Heart left ventricle (tissue), 16 donors: ENCODE measurements at regions of chr6 and their contacts with region 1.

Region 1: DNA sequence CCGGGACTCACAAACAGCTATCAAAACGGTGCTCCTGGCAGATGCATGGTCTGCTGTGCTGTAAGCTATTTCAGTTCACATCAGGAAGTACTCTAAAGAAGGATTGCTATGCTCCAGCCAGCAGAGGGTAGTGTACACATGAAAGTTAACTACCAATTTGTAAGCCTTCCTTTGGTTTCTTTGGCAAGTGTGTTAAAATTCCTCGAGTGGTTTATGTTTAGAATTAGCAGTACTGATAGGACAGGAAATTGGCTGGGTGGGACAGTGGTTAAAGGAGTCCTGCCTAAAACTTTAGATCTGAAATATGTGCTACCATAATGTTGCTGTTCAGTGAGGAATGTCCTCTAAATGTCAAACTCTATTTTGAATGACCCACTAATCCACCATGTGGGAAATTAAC is 47.4 kb downstream of the TRMT11 start:
- DNase-seq: peak in 3 of 5 donors; percentile 25 to 35 (median 32)
- ATAC-seq: peak; percentile 89 to 96 (median 94)
- H3K4me3 ChIP-seq: no peak overlapping the region
- H3K27ac ChIP-seq: no peak overlapping the region
- H3K4me1 ChIP-seq: peaks cover 0 to 19% (median 6%) of the 10 kb centered on the region in 12 donors
- H3K27me3 ChIP-seq: no peaks in the 10 kb centered on the region
- CTCF ChIP-seq: peak; percentile 24 to 83 (median 56)
- POLR2A ChIP-seq: no peak

Region 2: GRCh38 chr6:125821825-125822281 is 211.8 kb before region 1 on chr6:
- intact Hi-C with region 1: no loop called
- DNase-seq: peak in 2 of 5 donors; percentile 18 to 30
- ATAC-seq: peak; percentile 19 to 78 (median 75)
- H3K4me3 ChIP-seq: no peak overlapping the region
- H3K27ac ChIP-seq: peak overlapping the region in 2 of 12 donors; percentile 1 to 3
- H3K4me1 ChIP-seq: peaks cover 0 to 55% (median 27%) of the 10 kb centered on the region in 12 donors
- H3K27me3 ChIP-seq: no peaks in the 10 kb centered on the region
- CTCF ChIP-seq: no peak
- POLR2A ChIP-seq: no peak

Region 3: GRCh38 chr6:126170978-126171382 is 137.3 kb after region 1 on chr6:
- intact Hi-C with region 1: loop called in 1 of 10 experiments (anchors 10 kb)
- DNase-seq: no peak
- ATAC-seq: no peak
- H3K4me3 ChIP-seq: no peak overlapping the region
- H3K27ac ChIP-seq: no peak overlapping the region
- H3K4me1 ChIP-seq: no peaks in the 10 kb centered on the region
- H3K27me3 ChIP-seq: peaks cover 0 to 7% (median 0%) of the 10 kb centered on the region in 9 donors
- CTCF ChIP-seq: peak in 9 of 12 donors; percentile 6 to 44 (median 37)
- POLR2A ChIP-seq: no peak

Region 4: GRCh38 chr6:126210398-126211075 is 176.8 kb after region 1 on chr6:
- intact Hi-C with region 1: no loop called
- DNase-seq: no peak
- ATAC-seq: no peak
- H3K4me3 ChIP-seq: no peak overlapping the region
- H3K27ac ChIP-seq: no peak overlapping the region
- H3K4me1 ChIP-seq: no peaks in the 10 kb centered on the region
- H3K27me3 ChIP-seq: no peaks in the 10 kb centered on the region
- CTCF ChIP-seq: no peak
- POLR2A ChIP-seq: no peak

Region 5: DNA sequence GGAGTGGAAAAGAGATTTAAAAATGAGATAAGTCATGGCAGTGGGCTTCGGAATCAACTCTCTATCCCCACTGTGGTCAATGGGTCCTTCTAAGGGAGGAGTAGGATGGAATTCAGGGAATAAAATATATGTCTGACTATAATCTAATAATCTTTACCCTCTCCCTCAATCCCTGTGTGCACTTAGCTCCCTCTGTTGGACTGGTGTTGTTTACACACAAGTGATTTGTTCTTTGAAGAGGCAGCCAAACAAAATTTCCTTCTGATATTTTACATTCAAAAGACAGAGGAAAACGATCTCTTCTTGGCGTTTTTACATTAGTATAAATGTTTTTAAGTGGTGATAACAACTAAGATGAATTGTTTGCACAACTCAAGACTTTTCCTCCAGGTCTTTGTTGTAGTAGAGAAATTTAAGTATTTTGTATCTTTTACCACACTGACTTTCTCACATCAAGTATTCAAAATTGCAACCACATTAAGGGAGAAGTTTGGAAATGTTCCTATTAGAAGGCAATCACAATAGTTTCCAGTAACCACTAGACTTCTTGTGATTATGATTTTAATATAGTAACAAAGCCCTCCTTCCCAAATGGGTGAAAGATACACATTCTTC is 624.0 kb after region 1 on chr6:
- intact Hi-C with region 1: loop called in 3 of 10 experiments (anchors 5 to 10 kb)
- DNase-seq: no peak
- ATAC-seq: no peak
- H3K4me3 ChIP-seq: no peak overlapping the region
- H3K27ac ChIP-seq: no peak overlapping the region
- H3K4me1 ChIP-seq: no peaks in the 10 kb centered on the region
- H3K27me3 ChIP-seq: no peaks in the 10 kb centered on the region
- CTCF ChIP-seq: peak in 10 of 12 donors; percentile 8 to 46 (median 20)
- POLR2A ChIP-seq: no peak

Region 6: DNA sequence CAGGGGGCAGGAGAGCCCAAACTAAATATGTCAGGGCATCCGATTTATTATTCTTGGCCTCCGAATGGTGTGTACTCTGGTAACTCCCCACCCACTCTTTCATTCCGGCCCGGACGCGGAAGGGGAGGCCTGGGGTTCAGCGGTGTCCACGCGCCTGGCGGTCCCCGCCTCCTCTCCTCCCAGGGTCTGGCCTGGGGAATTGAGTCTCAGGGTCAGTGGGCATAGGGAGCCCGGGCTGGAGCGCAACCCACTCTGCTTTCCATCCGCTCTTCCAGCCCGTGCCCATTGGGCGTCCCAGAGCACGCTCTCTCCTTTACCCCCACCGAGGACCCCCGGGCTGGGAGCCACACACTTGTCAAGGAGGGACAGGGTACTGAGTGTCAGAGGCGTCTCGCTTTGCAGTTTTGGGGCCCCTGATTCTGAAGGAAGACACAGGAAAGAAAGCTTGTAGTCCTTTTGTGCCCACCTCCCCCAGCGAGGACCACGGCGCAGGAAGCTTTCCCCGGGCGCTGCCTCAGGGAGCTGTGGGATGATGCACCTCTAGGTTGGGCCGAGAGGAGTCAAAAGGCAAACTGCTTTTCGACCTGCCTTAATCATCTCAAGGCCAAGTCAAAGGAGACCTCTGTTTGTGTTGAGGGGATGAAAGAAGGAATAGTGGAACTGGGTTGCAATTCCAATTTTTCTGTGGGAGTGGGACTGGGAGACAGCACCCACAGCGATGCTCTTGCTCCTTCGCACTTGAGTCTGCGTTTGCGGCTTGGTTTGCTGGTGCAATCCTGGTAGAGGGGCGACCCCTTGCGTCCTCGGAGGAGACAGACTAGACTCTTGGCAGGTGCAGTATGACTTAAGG is 1087.3 kb after region 1 on chr6:
- intact Hi-C with region 1: loop called in 3 of 10 experiments (anchors 5 to 10 kb)
- DNase-seq: peak; percentile 58 to 77 (median 64)
- ATAC-seq: peak; percentile 77 to 86 (median 84)
- H3K4me3 ChIP-seq: peak overlapping the region in 11 of 12 donors; percentile 5 to 66 (median 54)
- H3K27ac ChIP-seq: no peak overlapping the region
- H3K4me1 ChIP-seq: peaks cover 0 to 35% (median 22%) of the 10 kb centered on the region in 12 donors
- H3K27me3 ChIP-seq: peaks cover 14 to 79% (median 33%) of the 10 kb centered on the region in 9 donors
- CTCF ChIP-seq: peak; percentile 39 to 74 (median 66)
- POLR2A ChIP-seq: no peak

Region 7: DNA sequence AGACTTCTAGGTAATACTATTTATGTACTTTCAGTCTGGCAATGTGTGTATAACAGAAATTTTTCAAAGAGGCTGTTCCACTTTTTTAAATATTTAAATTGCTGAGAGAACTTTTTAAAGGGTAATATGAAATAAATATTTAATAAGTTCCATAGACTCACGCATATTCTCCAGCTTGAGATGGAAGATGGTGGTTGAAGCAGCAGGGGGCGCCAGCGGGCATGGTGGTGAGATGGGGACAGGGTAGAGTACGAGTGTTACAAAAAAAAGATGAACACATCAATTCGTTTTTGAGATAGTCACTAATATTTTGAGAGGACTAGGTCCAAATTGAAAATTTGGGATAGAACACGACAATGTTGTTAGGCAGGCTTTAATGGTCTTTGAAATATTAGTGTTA is 1153.2 kb after region 1 on chr6:
- intact Hi-C with region 1: loop called in 1 of 10 experiments (anchors 10 kb)
- DNase-seq: peak; percentile 45 to 84 (median 64)
- ATAC-seq: peak in 1 of 4 donors; percentile 60
- H3K4me3 ChIP-seq: no peak overlapping the region
- H3K27ac ChIP-seq: no peak overlapping the region
- H3K4me1 ChIP-seq: peaks cover 0 to 9% (median 0%) of the 10 kb centered on the region in 12 donors
- H3K27me3 ChIP-seq: no peaks in the 10 kb centered on the region
- CTCF ChIP-seq: peak in 11 of 12 donors; percentile 15 to 57 (median 50)
- POLR2A ChIP-seq: no peak

Region 8: DNA sequence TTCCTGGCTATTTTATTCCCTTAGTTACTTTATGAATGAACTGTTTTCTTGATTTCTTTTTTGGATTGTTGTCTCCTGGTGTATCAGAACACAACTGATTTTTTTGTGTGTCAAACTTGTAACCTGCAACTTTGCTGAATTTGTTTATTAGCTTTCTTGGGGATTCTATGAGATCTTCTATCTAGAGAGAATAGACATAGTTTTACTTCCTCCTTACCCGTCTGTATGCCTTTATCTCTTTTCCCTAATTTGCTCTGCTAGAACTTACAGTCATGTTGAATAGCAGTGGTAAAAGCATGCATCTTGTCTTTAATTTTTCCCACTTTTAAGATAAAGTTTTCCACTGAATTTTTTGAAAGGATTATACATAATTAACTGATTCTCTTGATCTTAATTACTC is 1246.1 kb after region 1 on chr6:
- intact Hi-C with region 1: loop called in 1 of 10 experiments (anchors 10 kb)
- DNase-seq: no peak
- ATAC-seq: no peak
- H3K4me3 ChIP-seq: no peak overlapping the region
- H3K27ac ChIP-seq: no peak overlapping the region
- H3K4me1 ChIP-seq: peaks cover 0 to 54% (median 24%) of the 10 kb centered on the region in 12 donors
- H3K27me3 ChIP-seq: no peaks in the 10 kb centered on the region
- CTCF ChIP-seq: no peak
- POLR2A ChIP-seq: no peak